Right cardiac atrium (tissue), 5 donors: ENCODE measurements at regions of chr2 and their contacts with region 1.

Region 1: GRCh38 chr2:68362069-68362468 is 3.0 kb upstream of the PLEK start:
- DNase-seq: peak; percentile 76 to 94 (median 89)
- ATAC-seq: peak; percentile 81 to 82
- H3K4me3 ChIP-seq: no peak overlapping the region
- H3K27ac ChIP-seq: no peak overlapping the region
- H3K4me1 ChIP-seq: no peaks in the 10 kb centered on the region
- H3K27me3 ChIP-seq: no peaks in the 10 kb centered on the region

Region 2: DNA sequence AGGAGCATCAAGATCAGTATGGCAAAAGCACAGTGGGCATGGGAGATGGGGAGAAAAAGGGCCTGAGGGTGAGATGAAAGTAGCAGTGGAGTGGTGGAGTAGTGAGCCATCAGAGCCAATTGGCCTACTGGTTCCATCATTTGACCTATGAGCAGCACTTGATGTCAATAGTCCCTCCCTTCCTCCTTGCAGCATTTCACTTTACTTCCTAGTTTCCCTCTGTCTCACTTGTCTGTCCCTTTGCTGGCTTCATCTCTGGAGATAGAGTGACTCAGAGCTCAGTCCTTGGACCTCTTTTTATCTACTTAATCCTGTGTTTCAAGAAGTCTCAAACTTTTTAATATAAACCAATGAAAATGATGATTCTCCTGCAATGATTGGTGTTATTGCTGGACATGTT is 72.9 kb after region 1 on chr2:
- intact Hi-C with region 1: loop called (anchors 5 kb)
- DNase-seq: no peak
- ATAC-seq: peak; percentile 8 to 36
- H3K4me3 ChIP-seq: no peak overlapping the region
- H3K27ac ChIP-seq: no peak overlapping the region
- H3K4me1 ChIP-seq: peaks cover 4% of the 10 kb centered on the region
- H3K27me3 ChIP-seq: no peaks in the 10 kb centered on the region

Region 3: DNA sequence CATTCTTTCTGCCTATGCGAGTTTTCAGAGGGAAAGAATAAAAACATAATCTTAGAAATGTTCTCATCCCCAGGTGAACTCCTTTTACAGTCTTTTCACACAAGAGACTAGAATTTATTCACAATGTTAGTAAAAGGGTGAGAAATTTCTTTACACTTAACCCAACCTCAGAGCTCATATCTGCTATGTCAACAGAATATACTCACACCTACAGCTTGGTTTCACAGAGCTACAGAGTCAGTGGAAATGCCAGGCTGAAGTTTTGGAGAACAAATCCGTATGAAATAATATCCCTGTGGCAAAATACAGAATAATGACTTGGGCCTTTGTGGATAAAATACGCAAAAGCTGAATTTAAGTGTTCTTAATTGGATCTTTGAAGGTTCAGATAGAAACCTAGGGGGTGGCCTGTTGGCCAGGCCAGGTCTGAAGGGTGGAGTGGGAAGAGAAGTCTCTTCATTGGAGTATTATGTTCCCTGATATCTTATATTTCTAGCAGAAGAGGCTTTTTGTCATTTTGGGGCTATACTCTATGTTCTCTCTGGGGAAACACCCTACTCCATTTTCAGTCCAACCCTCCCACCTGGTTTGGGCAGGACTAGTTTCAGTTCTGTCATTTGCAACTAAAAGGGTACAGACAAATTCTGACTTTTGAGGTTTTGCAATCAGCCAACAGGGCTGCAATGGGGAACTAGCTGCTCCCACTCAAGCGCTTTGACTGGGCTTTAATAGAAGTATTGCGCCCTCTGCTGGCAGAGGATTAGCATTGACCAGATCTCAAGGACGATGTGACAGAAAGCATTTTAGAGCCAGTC is 79.3 kb after region 1 on chr2:
- intact Hi-C with region 1: loop called (anchors 5 kb)
- DNase-seq: peak; percentile 70 to 87 (median 86)
- ATAC-seq: peak; percentile 92 to 93
- H3K4me3 ChIP-seq: no peak overlapping the region
- H3K27ac ChIP-seq: peak overlapping the region; percentile 59
- H3K4me1 ChIP-seq: peaks cover 4% of the 10 kb centered on the region
- H3K27me3 ChIP-seq: no peaks in the 10 kb centered on the region